Endothelial cell of umbilical vein (primary cell): ENCODE measurements at regions of chr2 and their contacts with region 1.

Region 1: GRCh38 chr2:240566203-240567136 is 1.8 kb upstream of the RNPEPL1 start:
- DNase-seq: peak; percentile 79
- H3K4me3 ChIP-seq: peak overlapping the region in 2 of 3 experiments; percentile 18 to 20
- H3K27ac ChIP-seq: peak overlapping the region; percentile 98
- H3K4me1 ChIP-seq: peaks cover 41% of the 10 kb centered on the region
- H3K27me3 ChIP-seq: no peaks in the 10 kb centered on the region
- CTCF ChIP-seq: peak; percentile 61 to 79
- POLR2A ChIP-seq: no peak

Region 2: GRCh38 chr2:240136013-240136670 is 430.3 kb before region 1 on chr2 and contains the start of gene COPS9:
- CTCF ChIA-PET with region 1: no interaction called
- POLR2A ChIA-PET with region 1: no interaction called
- dilution Hi-C with region 1: no loop called
- intact Hi-C with region 1: loop called (anchors 2 kb)
- DNase-seq: peak; percentile 85
- H3K4me3 ChIP-seq: peak within 1 kb of the TSS; percentile 55 to 71 (median 59)
- H3K27ac ChIP-seq: peak within 1 kb of the TSS; percentile 58
- H3K4me1 ChIP-seq: peaks cover 9% of the 10 kb centered on the region
- H3K27me3 ChIP-seq: no peaks in the 10 kb centered on the region
- CTCF ChIP-seq: no peak
- POLR2A ChIP-seq: peak; percentile 72
- total RNA-seq, gene COPS9: 189 and 196 TPM in 2 replicates

Region 3: GRCh38 chr2:240217431-240218239 is 348.8 kb before region 1 on chr2:
- CTCF ChIA-PET with region 1: no interaction called
- POLR2A ChIA-PET with region 1: no interaction called
- dilution Hi-C with region 1: no loop called
- intact Hi-C with region 1: no loop called
- DNase-seq: no peak
- H3K4me3 ChIP-seq: no peak overlapping the region
- H3K27ac ChIP-seq: no peak overlapping the region
- H3K4me1 ChIP-seq: no peaks in the 10 kb centered on the region
- H3K27me3 ChIP-seq: no peaks in the 10 kb centered on the region
- CTCF ChIP-seq: no peak
- POLR2A ChIP-seq: no peak

Region 4: GRCh38 chr2:240513549-240514287 is 52.8 kb before region 1 on chr2:
- CTCF ChIA-PET with region 1: interaction called, 17 read pairs
- POLR2A ChIA-PET with region 1: no interaction called
- dilution Hi-C with region 1: no loop called
- intact Hi-C with region 1: loop called (anchors 2 kb)
- DNase-seq: peak; percentile 70
- H3K4me3 ChIP-seq: no peak overlapping the region
- H3K27ac ChIP-seq: no peak overlapping the region
- H3K4me1 ChIP-seq: no peaks in the 10 kb centered on the region
- H3K27me3 ChIP-seq: no peaks in the 10 kb centered on the region
- CTCF ChIP-seq: peak; percentile 87 to 92
- POLR2A ChIP-seq: no peak

Region 5: DNA sequence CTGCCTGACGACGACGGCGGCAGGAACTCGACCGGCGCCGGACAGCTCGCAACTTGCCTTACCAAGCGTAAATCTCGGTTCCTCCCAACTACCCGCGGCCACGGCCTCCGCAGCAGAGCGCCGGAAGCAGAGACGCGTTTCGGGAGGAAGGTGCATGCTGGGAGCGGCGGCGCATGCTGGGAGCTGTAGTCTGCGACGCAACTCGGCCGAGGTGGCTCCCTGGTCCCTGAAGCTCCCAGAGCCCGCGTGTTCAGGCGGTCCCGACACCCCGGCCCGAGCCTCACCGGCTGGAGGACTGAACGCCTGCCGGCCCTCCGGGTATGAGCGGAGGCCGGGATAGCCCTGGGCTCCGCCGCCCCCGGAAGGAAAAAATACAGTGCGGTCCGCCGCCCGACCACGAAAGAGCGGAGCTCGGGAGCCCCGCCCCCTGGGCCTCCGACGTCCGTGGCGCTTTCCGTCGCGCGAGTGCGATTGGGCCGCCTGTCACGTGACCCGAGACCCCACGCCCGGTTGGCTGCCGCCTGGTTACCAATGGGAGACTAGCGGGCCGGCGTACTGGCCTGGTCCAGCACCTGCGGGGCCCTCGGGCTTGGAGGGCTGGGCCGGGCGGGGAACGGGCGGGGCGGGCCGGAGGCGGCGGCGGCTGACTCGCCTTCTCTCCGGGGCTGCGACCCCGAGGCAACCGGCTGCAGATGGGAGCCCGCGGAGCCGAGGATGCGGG is 19.9 kb after region 1 on chr2 and contains the start of gene CAPN10:
- CTCF ChIA-PET with region 1: interaction called, 47 read pairs
- POLR2A ChIA-PET with region 1: interaction called, 13 read pairs
- dilution Hi-C with region 1: no loop called
- intact Hi-C with region 1: loop called (anchors 1 kb)
- DNase-seq: peak; percentile 95
- H3K4me3 ChIP-seq: peak within 1 kb of the TSS; percentile 76 to 84 (median 84)
- H3K27ac ChIP-seq: peak within 1 kb of the TSS; percentile 74
- H3K4me1 ChIP-seq: peaks cover 17% of the 10 kb centered on the region
- H3K27me3 ChIP-seq: no peaks in the 10 kb centered on the region
- CTCF ChIP-seq: no peak
- POLR2A ChIP-seq: peak; percentile 66
- total RNA-seq, gene CAPN10: 37.9 and 39.9 TPM in 2 replicates

Region 6: DNA sequence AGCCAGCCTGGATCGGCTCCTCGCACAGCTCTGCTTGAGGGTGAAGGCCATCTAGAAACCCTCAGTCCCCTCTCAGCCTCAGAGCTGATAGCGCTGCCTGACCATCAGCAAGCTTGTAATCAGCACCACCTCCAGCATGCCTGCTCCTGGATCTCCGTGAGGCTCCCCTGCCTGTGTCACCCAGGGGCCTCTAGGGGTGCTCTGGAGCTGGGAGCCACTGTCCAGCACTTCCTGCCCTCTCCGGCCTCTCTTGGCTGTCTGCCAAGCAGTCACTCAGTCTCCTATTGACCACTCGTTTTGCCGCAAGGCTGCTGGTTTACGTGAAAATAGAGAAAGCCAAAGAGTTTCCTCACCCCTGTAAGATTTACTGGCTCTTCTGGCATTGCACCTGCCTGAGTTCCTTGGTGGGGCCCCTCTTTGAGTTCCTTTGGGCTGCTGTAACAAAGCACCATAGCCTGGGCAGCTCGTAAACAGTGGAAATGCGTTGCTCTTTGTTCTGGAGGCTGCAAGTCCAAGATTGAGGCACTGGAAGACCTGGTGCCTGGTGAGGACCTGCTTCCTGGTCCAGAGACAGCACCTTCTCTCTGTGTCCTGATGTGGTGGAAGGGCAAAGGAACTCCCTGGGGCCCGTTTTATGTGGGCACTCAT is 37.9 kb after region 1 on chr2:
- CTCF ChIA-PET with region 1: no interaction called
- POLR2A ChIA-PET with region 1: interaction called, 7 read pairs
- dilution Hi-C with region 1: no loop called
- intact Hi-C with region 1: loop called (anchors 1 kb)
- DNase-seq: peak; percentile 70
- H3K4me3 ChIP-seq: no peak overlapping the region
- H3K27ac ChIP-seq: no peak overlapping the region
- H3K4me1 ChIP-seq: peaks cover 2% of the 10 kb centered on the region
- H3K27me3 ChIP-seq: no peaks in the 10 kb centered on the region
- CTCF ChIP-seq: peak; percentile 74 to 85
- POLR2A ChIP-seq: no peak

Region 7: GRCh38 chr2:240725671-240726070 is 159.2 kb after region 1 on chr2:
- CTCF ChIA-PET with region 1: no interaction called
- POLR2A ChIA-PET with region 1: no interaction called
- dilution Hi-C with region 1: no loop called
- intact Hi-C with region 1: no loop called
- DNase-seq: no peak
- H3K4me3 ChIP-seq: no peak overlapping the region
- H3K27ac ChIP-seq: no peak overlapping the region
- H3K4me1 ChIP-seq: no peaks in the 10 kb centered on the region
- H3K27me3 ChIP-seq: no peaks in the 10 kb centered on the region
- CTCF ChIP-seq: no peak
- POLR2A ChIP-seq: no peak

Region 8: GRCh38 chr2:241217320-241218031 is 651.0 kb after region 1 on chr2:
- CTCF ChIA-PET with region 1: no interaction called
- POLR2A ChIA-PET with region 1: no interaction called
- dilution Hi-C with region 1: no loop called
- intact Hi-C with region 1: loop called (anchors 5 kb)
- DNase-seq: peak; percentile 63
- H3K4me3 ChIP-seq: peak overlapping the region in 2 of 3 experiments; percentile 16 to 40
- H3K27ac ChIP-seq: no peak overlapping the region
- H3K4me1 ChIP-seq: peaks cover 5% of the 10 kb centered on the region
- H3K27me3 ChIP-seq: no peaks in the 10 kb centered on the region
- CTCF ChIP-seq: no peak
- POLR2A ChIP-seq: no peak